ENCODE measurements at regions of chr11 and their contacts with region 1.

Region 1: GRCh38 chr11:131674051-131674755 is 303.8 kb downstream of the NTM start:
- DNase-seq: peak; percentile 80
- ATAC-seq: peak; percentile 98

Region 2: DNA sequence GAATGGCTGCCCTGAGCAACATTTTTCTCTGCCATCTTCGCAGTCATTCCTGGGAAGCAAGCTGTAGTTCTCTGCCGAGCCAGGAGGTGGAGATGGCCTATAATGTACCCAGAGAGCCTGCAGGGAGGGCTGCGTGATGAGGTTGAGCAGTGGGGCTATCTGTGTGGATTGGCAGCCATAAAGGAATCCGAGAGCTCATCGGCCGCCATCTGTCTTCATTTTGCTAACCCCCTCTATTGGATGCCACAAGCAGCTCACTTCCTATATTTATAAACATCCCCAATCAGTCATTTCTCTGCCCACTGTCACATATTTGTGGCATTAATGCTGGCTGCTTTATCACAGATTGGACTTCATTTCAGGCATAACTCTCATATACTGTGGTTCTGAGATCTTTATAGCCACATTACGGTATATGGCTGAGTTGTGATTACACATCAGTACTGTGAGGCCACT is 94.2 kb before region 1 on chr11:
- intact Hi-C with region 1: loop called (anchors 5 kb)
- DNase-seq: no peak
- ATAC-seq: peak; percentile 43

Region 3: DNA sequence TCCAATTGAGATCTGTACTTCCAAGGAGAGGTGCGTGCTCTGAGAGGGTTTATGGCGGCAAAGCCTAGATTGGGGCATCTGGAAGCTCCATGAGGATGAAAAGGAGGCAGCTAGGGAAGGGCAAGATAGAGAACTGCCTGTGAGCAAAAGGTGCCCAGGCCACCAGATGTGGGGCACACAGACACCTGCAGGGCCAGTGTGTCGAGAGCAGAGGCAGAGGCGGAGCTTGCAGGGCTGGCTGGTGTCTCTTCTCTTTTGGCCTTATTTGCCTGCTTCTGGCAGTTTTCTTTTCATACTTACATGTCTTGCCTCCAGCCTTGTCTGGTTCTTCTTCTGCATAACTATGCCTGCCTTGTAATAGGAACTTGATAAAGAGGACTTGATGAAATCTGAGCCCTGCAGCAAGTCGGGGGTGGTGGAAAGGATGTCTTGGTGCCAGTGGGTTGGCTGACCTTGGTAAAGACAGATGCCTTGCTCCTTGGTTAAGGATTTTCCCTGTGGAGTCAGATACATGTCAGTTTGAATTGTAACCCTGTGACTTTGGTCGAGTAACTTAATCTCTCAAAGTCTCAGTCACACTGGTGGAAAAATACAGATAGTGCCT is 376.5 kb after region 1 on chr11:
- intact Hi-C with region 1: no loop called
- DNase-seq: no peak
- ATAC-seq: no peak